ENCODE measurements at regions of chr18 and their contacts with region 1.

Region 1: DNA sequence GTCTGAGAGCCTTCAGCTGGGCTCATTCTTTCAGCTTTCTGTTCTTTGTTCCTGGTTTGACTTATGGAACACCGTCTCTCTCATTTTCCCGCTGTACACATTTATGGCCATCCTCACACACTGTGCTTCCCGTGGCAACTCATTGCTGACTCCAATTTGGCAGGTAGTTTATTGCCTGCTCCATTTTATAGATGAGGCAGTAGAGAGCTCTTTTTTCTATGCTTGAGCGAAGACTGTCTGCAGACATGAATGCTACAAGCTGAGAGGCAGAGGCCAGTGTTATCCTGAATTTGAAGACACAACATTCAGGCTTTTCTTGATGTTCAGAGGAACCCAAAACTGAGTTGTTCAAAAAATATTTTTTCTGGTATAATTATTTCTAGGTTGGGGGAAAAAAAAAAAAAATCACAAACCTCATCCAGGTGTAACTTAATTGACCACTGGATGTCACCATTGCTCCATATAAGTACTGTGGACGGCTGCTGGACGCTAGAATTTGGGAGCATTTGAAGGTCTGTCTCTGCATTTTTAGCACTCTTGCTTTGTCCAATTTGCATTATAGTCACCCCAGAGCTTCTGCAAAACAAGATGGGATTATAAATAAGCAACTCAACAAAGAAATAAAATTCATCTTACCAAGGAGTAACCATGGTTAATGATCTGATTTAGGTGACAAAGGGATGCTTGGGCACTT is 83.5 kb downstream of the HRH4 start:
- DNase-seq: peak; percentile 21
- H3K4me3 ChIP-seq: no peak overlapping the region
- H3K27ac ChIP-seq: no peak overlapping the region
- H3K4me1 ChIP-seq: no peaks in the 10 kb centered on the region
- CTCF ChIP-seq: peak; percentile 81

Region 2: GRCh38 chr18:23902396-23902795 is 641.6 kb before region 1 on chr18:
- CTCF ChIA-PET with region 1: no interaction called
- POLR2A ChIA-PET with region 1: no interaction called
- intact Hi-C with region 1: no loop called
- DNase-seq: no peak
- H3K4me3 ChIP-seq: no peak overlapping the region
- H3K27ac ChIP-seq: no peak overlapping the region
- H3K4me1 ChIP-seq: no peaks in the 10 kb centered on the region
- CTCF ChIP-seq: no peak

Region 3: DNA sequence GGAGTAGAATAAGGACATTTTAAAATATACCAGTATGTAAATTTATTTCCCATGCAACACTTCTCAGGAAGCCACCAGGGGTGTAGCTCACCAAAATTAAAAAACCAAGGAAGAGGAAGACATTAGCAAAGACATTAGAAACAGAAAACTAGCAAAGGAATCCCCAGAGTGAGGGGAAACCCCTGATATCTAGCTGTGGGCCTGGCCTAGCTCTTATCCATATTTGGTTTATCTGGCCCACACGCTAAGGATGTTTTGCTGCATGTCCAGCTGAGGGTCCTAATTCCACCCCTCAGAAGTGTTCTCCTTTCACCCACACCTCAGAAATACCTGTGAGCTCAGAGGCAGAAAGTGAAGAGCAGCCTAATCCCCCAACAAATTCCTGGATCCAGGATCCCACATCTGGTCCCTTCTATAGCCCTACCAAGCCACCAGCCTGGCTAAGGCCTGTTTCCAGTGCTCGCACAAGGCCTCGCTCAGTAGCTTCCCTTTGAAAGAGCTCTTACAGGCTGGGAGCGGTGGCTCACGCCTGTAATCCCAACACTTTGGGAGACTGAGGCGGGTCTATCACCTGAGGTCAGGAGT is 163.7 kb before region 1 on chr18:
- CTCF ChIA-PET with region 1: no interaction called
- POLR2A ChIA-PET with region 1: no interaction called
- intact Hi-C with region 1: no loop called
- DNase-seq: no peak
- H3K4me3 ChIP-seq: no peak overlapping the region
- H3K27ac ChIP-seq: no peak overlapping the region
- H3K4me1 ChIP-seq: no peaks in the 10 kb centered on the region
- CTCF ChIP-seq: no peak

Region 4: GRCh38 chr18:24570716-24571115 is 26.8 kb after region 1 on chr18:
- CTCF ChIA-PET with region 1: no interaction called
- POLR2A ChIA-PET with region 1: no interaction called
- intact Hi-C with region 1: no loop called
- DNase-seq: no peak
- H3K4me3 ChIP-seq: no peak overlapping the region
- H3K27ac ChIP-seq: no peak overlapping the region
- H3K4me1 ChIP-seq: no peaks in the 10 kb centered on the region
- CTCF ChIP-seq: no peak

Region 5: DNA sequence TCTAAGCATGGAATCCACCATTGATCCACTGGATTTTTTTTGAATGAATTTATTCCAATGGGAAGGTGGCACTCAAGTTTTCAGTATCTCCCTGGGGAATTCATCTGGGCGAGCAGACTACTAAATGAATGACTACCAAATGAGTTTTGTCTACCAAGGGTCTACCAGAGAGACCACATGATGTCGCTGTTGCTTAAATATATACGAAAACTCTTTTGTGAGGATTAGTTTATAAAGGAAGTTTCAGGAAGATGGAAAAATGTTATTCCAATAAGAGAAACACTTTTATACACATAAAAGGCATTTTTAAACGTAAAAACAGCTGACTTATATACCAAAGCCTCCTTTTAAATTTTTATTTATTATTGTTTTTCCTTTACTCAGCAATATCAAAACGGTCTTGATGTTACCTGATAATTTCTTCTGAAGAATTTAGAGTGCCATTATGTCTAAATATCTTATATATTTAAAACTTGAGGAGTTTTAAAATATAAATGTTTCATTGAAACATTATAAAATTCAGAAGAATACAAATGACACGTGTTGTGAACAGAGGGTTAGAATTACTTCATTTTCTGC is 56.2 kb after region 1 on chr18:
- CTCF ChIA-PET with region 1: no interaction called
- POLR2A ChIA-PET with region 1: no interaction called
- intact Hi-C with region 1: loop called (anchors 10 kb)
- DNase-seq: peak; percentile 66
- H3K4me3 ChIP-seq: no peak overlapping the region
- H3K27ac ChIP-seq: no peak overlapping the region
- H3K4me1 ChIP-seq: no peaks in the 10 kb centered on the region
- CTCF ChIP-seq: peak; percentile 91

Measured in OCI-LY7 (cell line).